ENCODE measurements at regions of chr2 and their contacts with region 1.

Region 1: DNA sequence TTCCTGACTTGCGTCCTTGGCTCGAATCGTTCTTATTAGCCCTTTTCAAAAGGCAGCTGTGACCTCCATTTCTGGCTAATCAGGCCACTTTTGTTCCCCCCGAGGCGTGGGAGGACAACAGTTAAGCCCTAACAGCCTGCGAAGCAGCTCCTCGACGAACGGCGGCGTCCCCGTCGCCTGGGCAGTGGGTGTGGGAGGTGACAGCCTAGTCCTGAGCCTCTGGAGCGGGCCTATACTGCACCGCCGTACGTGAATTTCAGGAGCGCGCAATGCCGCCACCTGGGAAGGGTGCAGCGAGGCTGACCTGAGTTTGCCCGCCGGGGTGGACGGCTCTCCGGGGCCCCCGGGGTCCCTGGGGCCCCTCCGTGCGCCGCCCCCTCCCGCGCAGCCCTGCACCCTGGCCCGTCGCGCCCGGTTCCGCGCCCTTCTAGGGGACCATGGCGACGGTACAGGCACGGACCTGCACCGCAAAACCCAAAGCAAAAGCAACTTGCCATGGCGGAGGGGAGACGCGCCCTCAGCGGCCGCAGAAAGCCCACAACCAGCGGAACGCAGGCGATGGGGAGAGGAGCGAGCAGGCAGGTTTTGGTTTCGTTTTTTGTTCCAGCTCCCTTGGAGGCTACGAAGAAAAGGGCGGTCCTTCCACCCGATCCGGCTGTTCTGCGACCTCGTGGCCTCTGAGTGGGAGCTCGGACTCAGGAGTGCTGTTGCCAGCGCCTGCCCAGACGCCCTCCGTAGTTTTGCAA is at the start of gene RBM43:
- DNase-seq: peak; percentile 93 to 96 (median 96)
- ATAC-seq: peak; percentile 97 to 98
- H3K4me3 ChIP-seq: peak within 1 kb of the TSS; percentile 96
- H3K27ac ChIP-seq: peak within 1 kb of the TSS; percentile 98
- H3K4me1 ChIP-seq: no peaks in the 10 kb centered on the region
- H3K27me3 ChIP-seq: no peaks in the 10 kb centered on the region
- total RNA-seq, gene RBM43: 2.2 to 4.0 (median 3.7) TPM

Region 2: GRCh38 chr2:151161821-151162551 is 99.4 kb before region 1 on chr2:
- intact Hi-C with region 1: no loop called
- DNase-seq: no peak
- ATAC-seq: no peak
- H3K4me3 ChIP-seq: no peak overlapping the region
- H3K27ac ChIP-seq: no peak overlapping the region
- H3K4me1 ChIP-seq: no peaks in the 10 kb centered on the region
- H3K27me3 ChIP-seq: no peaks in the 10 kb centered on the region

Region 3: DNA sequence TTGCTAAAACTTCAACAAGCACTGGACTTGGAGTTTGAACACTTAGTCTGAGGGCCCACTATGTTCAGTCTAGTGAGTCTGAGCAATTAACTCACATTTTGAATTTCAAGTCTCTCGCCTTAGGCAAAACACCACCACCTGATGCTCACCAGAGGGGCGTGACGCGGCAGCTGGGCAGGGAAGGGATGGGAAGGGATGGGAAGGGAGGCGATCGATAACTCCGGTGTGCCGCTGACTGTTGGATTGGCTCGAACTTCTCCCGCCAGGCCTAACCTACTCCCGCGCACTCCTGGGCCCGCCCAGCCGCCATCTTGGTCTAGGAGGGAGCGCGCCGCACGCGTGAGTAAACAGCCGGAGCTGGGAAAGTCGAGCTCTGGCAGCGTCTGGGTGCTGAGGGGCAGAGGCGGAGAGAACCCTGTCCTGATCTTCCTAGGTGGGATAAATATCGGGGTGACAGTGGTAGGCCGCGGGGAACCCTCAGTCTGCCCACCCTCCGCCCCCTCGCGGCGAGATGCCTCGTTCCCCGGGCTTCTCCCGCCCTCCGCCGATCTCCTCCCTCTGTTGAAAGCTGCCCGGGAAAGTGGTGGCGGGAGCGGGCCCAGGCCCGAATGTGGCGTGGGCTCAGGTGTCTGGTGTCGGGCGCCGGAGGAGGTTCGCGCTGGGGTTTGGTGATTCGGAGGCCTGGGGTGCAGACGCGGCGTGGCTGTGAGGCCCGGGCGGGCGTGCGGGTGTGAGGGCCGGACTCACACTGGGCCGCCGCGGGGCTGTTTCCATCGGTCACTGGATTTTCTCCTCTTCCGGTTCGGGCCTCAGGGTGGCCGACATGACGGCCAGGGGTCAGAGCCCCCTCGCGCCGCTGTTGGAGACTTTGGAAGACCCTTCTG is 148.4 kb after region 1 on chr2 and contains the start of gene RIF1:
- intact Hi-C with region 1: loop called in 1 of 4 experiments (anchors 10 kb)
- DNase-seq: peak; percentile 91 to 95 (median 94)
- ATAC-seq: peak; percentile 99 to 100
- H3K4me3 ChIP-seq: peak within 1 kb of the TSS; percentile 87
- H3K27ac ChIP-seq: peak within 1 kb of the TSS; percentile 36
- H3K4me1 ChIP-seq: no peaks in the 10 kb centered on the region
- H3K27me3 ChIP-seq: no peaks in the 10 kb centered on the region
- total RNA-seq, gene RIF1: 15.6 to 18.9 (median 18.2) TPM

Measured in right cardiac atrium (tissue), 5 donors.